Colonic mucosa (tissue), 4 donors: ENCODE measurements at regions of chr6 and their contacts with region 1.

Region 1: GRCh38 chr6:35139908-35140655 is 1.1 kb downstream of the TCP11 start:
- DNase-seq: peak; percentile 47
- H3K4me3 ChIP-seq: no peak overlapping the region
- H3K27ac ChIP-seq: no peak overlapping the region
- H3K4me1 ChIP-seq: no peaks in the 10 kb centered on the region
- H3K27me3 ChIP-seq: no peaks in the 10 kb centered on the region
- CTCF ChIP-seq: peak; percentile 73

Region 2: DNA sequence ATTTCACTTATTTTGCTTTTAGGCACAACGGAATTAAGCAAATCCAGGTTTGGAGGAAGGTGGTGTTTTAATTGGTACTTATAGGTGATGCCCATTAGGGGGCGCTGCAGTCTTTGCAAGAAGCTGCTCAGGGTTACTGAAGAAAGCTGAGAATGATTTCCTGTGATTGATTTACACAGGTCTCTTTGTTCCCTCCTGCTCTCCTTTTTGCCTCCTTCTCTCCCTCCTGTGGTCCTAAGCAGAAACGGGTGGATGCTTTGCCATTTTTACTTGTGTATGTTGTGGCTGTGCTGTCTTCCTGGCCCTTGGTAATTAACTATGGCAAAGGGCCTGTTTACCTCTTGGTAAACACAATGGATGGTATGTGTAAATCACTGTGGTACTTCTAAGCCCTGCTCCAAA is 153.2 kb before region 1 on chr6:
- intact Hi-C with region 1: loop called (anchors 2 kb)
- DNase-seq: peak; percentile 71
- H3K4me3 ChIP-seq: no peak overlapping the region
- H3K27ac ChIP-seq: no peak overlapping the region
- H3K4me1 ChIP-seq: no peaks in the 10 kb centered on the region
- H3K27me3 ChIP-seq: no peaks in the 10 kb centered on the region
- CTCF ChIP-seq: peak; percentile 67